Common myeloid progenitor, CD34-positive (primary cell): ENCODE measurements at regions of chr7 and their contacts with region 1.

Region 1: GRCh38 chr7:121012170-121012874 is 23.8 kb downstream of the CPED1 start:
- DNase-seq: no peak
- H3K4me3 ChIP-seq: no peak overlapping the region
- H3K27ac ChIP-seq: no peak overlapping the region
- H3K4me1 ChIP-seq: peaks cover 0 to 4% (median 0%) of the 10 kb centered on the region in 4 experiments
- H3K27me3 ChIP-seq: no peaks in the 10 kb centered on the region

Region 2: GRCh38 chr7:120996333-120996987 is 15.9 kb before region 1 on chr7:
- CTCF ChIA-PET with region 1: interaction called, 16 read pairs
- POLR2A ChIA-PET with region 1: no interaction called
- DNase-seq: peak; percentile 94 to 98 (median 98)
- H3K4me3 ChIP-seq: peak overlapping the region in 4 of 7 experiments; percentile 17 to 38 (median 35)
- H3K27ac ChIP-seq: peak overlapping the region in 1 of 2 experiments; percentile 45
- H3K4me1 ChIP-seq: peaks cover 29 to 93% (median 66%) of the 10 kb centered on the region in 4 experiments
- H3K27me3 ChIP-seq: no peaks in the 10 kb centered on the region